IMR-90 (cell line): ENCODE measurements at regions of chrX and their contacts with region 1.

Region 1: GRCh38 chrX:149950681-149951080 is 12.4 kb upstream of the EOLA2 start:
- DNase-seq: peak; percentile 67
- ATAC-seq: peak; percentile 70; the same call in 1 of the 2 replicates
- H3K4me3 ChIP-seq: no peak overlapping the region
- H3K27ac ChIP-seq: no peak overlapping the region
- H3K4me1 ChIP-seq: no peaks in the 10 kb centered on the region
- H3K27me3 ChIP-seq: no peaks in the 10 kb centered on the region
- CTCF ChIP-seq: peak; percentile 48
- POLR2A ChIP-seq: no peak
- RAD21 ChIP-seq: peak; percentile 56

Region 2: DNA sequence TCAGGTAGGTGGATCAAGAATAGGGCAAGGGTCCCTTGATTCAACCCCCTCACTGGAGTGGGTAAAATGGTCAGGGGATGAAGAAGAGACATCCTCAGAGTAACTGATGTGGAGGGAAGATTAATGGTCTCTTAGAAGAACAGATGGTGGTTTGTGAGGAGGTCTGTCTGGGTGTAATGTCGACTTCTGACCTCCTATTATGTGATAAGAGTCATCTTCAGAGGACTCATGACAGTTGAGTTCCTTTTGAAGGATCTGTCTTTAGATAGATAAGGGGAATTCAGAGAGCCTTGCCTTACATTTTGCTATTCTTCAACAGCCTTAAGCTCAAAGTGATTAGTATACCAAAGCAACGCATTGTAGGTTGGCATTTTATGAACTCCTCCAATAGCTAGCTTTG is 96.8 kb before region 1 on chrX:
- CTCF ChIA-PET with region 1: no interaction called
- POLR2A ChIA-PET with region 1: no interaction called
- dilution Hi-C with region 1: no loop called
- in situ Hi-C with region 1: no loop called
- intact Hi-C with region 1: no loop called
- DNase-seq: no peak
- ATAC-seq: no peak
- H3K4me3 ChIP-seq: no peak overlapping the region
- H3K27ac ChIP-seq: no peak overlapping the region
- H3K4me1 ChIP-seq: no peaks in the 10 kb centered on the region
- H3K27me3 ChIP-seq: no peaks in the 10 kb centered on the region
- CTCF ChIP-seq: no peak
- POLR2A ChIP-seq: no peak
- RAD21 ChIP-seq: no peak

Region 3: DNA sequence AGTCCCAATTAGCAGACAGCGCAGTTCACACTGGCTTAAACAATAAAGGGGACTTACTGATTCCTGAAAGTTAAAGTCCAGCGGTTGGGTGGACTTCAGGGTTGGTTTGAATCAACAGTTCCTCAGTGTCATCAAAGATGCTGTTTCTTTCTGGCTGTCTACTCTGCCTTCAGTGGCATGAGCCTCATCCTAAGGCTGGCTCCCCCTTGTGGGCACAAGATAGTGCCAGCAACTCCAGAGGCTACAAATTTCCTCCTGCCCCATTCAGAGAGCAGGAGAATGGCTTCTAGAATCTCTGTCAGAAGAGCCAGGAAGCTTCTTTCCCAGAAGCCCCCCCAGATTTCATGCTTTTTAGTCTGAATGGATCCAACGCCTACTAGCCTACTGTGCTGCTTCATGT is 535.3 kb after region 1 on chrX:
- CTCF ChIA-PET with region 1: no interaction called
- POLR2A ChIA-PET with region 1: no interaction called
- dilution Hi-C with region 1: no loop called
- in situ Hi-C with region 1: loop called (anchors 25 kb)
- intact Hi-C with region 1: loop called (anchors 1 kb)
- DNase-seq: peak; percentile 59
- ATAC-seq: peak; percentile 75
- H3K4me3 ChIP-seq: no peak overlapping the region
- H3K27ac ChIP-seq: no peak overlapping the region
- H3K4me1 ChIP-seq: peaks cover 3% of the 10 kb centered on the region; the same call in 1 of the 2 replicates
- H3K27me3 ChIP-seq: no peaks in the 10 kb centered on the region
- CTCF ChIP-seq: peak; percentile 57
- POLR2A ChIP-seq: no peak
- RAD21 ChIP-seq: peak; percentile 63

Region 4: GRCh38 chrX:150575416-150575808 is 624.7 kb after region 1 on chrX:
- CTCF ChIA-PET with region 1: no interaction called
- POLR2A ChIA-PET with region 1: no interaction called
- dilution Hi-C with region 1: no loop called
- in situ Hi-C with region 1: no loop called
- intact Hi-C with region 1: loop called (anchors 10 kb)
- DNase-seq: peak; percentile 33
- ATAC-seq: no peak
- H3K4me3 ChIP-seq: no peak overlapping the region
- H3K27ac ChIP-seq: no peak overlapping the region
- H3K4me1 ChIP-seq: peaks cover 6% of the 10 kb centered on the region
- H3K27me3 ChIP-seq: no peaks in the 10 kb centered on the region
- CTCF ChIP-seq: no peak
- POLR2A ChIP-seq: no peak
- RAD21 ChIP-seq: no peak